ENCODE measurements at regions of chr1 and their contacts with region 1.

Region 1: GRCh38 chr1:74771913-74772515 is 39.1 kb downstream of the TYW3 start:
- DNase-seq: no peak
- ATAC-seq: peak in 2 of 4 donors; percentile 55 to 79
- H3K4me3 ChIP-seq: peak overlapping the region; percentile 40
- H3K27ac ChIP-seq: no peak overlapping the region
- H3K4me1 ChIP-seq: no peaks in the 10 kb centered on the region
- H3K27me3 ChIP-seq: no peaks in the 10 kb centered on the region
- CTCF ChIP-seq: peak; percentile 68

Region 2: DNA sequence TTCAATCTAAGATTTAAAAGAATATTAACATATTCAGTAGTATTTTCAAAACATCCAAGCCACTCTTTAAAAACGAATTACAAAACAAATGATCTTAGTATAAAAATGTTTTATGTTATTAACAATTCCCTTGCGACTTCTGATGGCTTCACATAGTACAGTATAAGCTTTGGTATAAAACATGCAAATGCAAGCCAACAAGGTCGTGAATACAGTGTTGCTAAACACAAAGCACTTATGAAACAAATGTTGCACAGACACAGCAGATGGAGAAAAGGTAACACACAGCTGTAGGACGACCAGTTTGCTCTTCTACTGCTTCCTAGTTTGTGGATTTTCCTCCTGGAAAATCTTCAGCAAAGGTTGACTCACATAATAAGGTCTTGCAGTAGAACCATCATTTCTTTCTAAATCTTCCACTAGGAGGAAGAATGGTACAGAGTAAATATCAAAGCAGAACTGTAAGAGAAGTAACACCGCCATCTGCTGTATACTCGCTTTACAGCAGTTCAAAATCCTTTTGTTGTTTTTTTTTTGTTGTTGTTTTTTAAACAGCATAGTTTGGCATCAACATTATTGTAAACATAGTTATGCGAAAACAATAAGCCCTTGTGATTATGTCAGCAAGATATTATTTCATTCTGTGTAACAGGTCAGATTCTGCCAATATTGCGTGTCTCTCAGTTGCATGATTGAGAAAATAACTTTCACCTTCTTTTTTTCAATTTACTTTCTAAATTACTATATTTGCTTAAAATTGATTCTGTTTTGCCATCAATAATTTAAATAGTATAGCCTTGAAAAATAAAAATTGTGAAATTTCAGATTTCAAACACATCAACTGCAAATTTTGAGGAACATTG is 431.6 kb after region 1 on chr1:
- intact Hi-C with region 1: loop called (anchors 2 to 5 kb)
- DNase-seq: no peak
- ATAC-seq: peak in 3 of 4 donors; percentile 56 to 78 (median 58)
- H3K4me3 ChIP-seq: no peak overlapping the region
- H3K27ac ChIP-seq: no peak overlapping the region
- H3K4me1 ChIP-seq: no peaks in the 10 kb centered on the region
- H3K27me3 ChIP-seq: no peaks in the 10 kb centered on the region
- CTCF ChIP-seq: peak; percentile 56